H1 (cell line): ENCODE measurements at regions of chr21 and their contacts with region 1.

Region 1: GRCh38 chr21:45140346-45140940 is 66.1 kb downstream of the ADARB1 start:
- DNase-seq: peak; percentile 68 to 73
- H3K4me3 ChIP-seq: no peak overlapping the region
- H3K27ac ChIP-seq: no peak overlapping the region
- H3K4me1 ChIP-seq: no peaks in the 10 kb centered on the region
- H3K27me3 ChIP-seq: no peaks in the 10 kb centered on the region
- CTCF ChIP-seq: peak; percentile 90 to 99 (median 99)
- EP300 ChIP-seq: no peak
- POLR2A ChIP-seq: no peak
- RAD21 ChIP-seq: peak; percentile 97

Region 2: DNA sequence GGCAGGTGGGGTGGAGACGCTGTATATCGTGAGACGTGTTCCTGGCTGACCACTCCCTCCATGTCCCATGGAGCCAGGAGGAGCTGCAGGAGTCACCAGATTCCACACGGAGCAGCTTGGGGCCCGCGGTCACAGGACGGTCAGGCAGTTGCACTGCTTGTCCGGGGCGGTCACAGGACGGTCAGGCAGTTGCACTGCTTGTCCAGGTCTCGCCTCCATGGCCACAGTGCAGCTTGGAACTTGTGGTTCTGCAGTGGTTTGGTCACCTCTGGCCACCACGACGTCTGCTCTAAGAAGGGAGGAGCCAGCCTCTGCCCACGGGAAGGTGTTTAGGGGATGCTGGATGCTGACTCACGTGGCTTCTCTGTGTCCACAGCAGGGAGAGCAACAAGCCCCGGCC is 167.6 kb before region 1 on chr21:
- CTCF ChIA-PET with region 1: interaction called, 28 read pairs
- POLR2A ChIA-PET with region 1: no interaction called
- DNase-seq: no peak
- H3K4me3 ChIP-seq: no peak overlapping the region
- H3K27ac ChIP-seq: no peak overlapping the region
- H3K4me1 ChIP-seq: no peaks in the 10 kb centered on the region; a peak in 1 of 7 replicates
- H3K27me3 ChIP-seq: no peaks in the 10 kb centered on the region
- CTCF ChIP-seq: no peak
- EP300 ChIP-seq: no peak
- POLR2A ChIP-seq: no peak
- RAD21 ChIP-seq: no peak

Region 3: DNA sequence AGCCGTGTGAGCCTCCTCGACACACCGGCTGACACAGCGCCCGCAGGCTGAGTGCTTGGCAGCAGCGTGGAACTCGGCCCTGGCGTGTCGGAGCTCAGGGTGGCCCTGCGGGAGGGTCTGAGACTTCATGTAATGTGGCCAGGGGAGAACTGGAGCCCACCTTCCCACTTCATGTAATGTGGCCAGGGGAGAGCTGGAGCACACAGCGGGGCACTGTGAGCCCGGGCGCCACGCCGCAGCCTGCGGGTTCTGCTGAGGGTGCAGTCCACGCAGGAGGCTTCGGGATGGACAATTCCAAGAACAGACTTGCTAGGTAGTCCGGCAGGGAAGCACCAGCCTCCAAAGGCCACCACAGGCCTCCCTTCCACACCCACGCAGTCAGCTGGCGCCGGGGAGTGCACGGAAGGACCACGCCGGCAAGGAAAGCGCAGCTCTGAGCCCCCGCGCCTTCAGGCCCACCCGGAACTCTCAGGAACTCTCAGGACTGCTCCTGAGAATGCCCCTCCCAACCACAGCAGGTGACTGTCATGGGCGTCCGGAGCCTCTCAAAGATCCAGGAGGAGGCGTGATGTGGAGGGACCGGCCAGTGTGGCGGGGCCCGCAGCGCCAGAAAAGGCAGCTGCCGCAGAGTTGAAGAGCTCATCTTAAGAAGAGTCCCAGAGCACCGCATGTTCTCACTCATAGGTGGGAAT is 85.4 kb before region 1 on chr21:
- CTCF ChIA-PET with region 1: interaction called, 11 read pairs
- POLR2A ChIA-PET with region 1: no interaction called
- DNase-seq: no peak
- H3K4me3 ChIP-seq: no peak overlapping the region
- H3K27ac ChIP-seq: no peak overlapping the region
- H3K4me1 ChIP-seq: peaks cover 5 to 15% (median 12%) of the 10 kb centered on the region in 4 experiments
- H3K27me3 ChIP-seq: peaks cover 0 to 3% (median 2%) of the 10 kb centered on the region in 4 experiments; a peak in 2 of 7 replicates
- CTCF ChIP-seq: no peak
- EP300 ChIP-seq: no peak
- POLR2A ChIP-seq: no peak
- RAD21 ChIP-seq: no peak

Region 4: DNA sequence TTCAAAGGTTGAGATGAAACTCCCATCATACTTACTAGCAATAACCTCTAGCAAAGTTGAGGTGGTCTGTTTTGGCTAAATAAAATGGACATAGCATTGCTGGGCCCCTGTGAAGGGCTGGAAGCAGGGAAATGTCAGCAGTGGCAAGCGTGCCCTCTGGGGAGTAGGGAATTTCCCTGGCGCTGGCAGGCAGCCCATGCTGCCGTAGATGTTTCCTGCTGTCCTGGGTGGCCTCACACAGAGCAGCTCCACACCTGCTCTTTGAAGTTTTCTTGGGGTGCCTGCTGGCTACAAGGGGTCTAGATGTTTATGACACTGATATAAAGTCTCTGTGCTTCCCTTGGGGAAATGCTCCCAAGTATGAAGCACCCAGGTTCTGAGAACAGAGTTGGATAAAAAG is 35.9 kb before region 1 on chr21:
- CTCF ChIA-PET with region 1: interaction called, 99 read pairs
- POLR2A ChIA-PET with region 1: interaction called, 3 read pairs
- DNase-seq: no peak
- H3K4me3 ChIP-seq: no peak overlapping the region
- H3K27ac ChIP-seq: no peak overlapping the region
- H3K4me1 ChIP-seq: no peaks in the 10 kb centered on the region
- H3K27me3 ChIP-seq: no peaks in the 10 kb centered on the region
- CTCF ChIP-seq: no peak
- EP300 ChIP-seq: no peak
- POLR2A ChIP-seq: no peak
- RAD21 ChIP-seq: no peak

Region 5: GRCh38 chr21:45152265-45152746 is 11.9 kb after region 1 on chr21:
- CTCF ChIA-PET with region 1: interaction called, 59 read pairs
- POLR2A ChIA-PET with region 1: interaction called, 3 read pairs
- DNase-seq: peak; percentile 25 to 58
- H3K4me3 ChIP-seq: no peak overlapping the region
- H3K27ac ChIP-seq: no peak overlapping the region
- H3K4me1 ChIP-seq: no peaks in the 10 kb centered on the region; a peak in 1 of 7 replicates
- H3K27me3 ChIP-seq: peaks cover 0 to 2% (median 0%) of the 10 kb centered on the region in 4 experiments; a peak in 1 of 7 replicates
- CTCF ChIP-seq: peak; percentile 61 to 75 (median 66)
- EP300 ChIP-seq: no peak
- POLR2A ChIP-seq: no peak
- RAD21 ChIP-seq: peak; percentile 70 to 77

Region 6: DNA sequence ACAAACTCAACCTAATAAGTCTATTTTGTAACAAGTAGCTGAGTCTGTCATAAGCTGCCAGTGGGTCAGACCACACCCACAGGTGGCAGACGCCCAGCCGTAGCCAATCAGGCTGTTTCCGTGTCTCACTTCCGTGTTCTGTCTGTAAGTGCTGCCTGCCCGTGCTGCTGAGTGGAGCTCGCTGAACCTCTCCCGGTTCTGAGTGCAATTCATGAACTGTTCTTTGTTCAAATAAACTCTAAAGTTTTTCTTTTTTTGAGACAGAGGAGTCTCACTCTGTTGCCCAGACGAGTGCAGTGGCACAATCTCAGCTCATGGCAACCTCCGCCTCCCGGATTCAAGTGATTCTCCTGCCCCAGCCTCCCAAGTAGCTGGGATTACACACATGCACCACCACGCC is 122.2 kb after region 1 on chr21:
- CTCF ChIA-PET with region 1: interaction called, 37 read pairs
- POLR2A ChIA-PET with region 1: no interaction called
- DNase-seq: peak in 1 of 2 experiments; percentile 26
- H3K4me3 ChIP-seq: no peak overlapping the region
- H3K27ac ChIP-seq: no peak overlapping the region
- H3K4me1 ChIP-seq: peaks cover 0 to 4% (median 0%) of the 10 kb centered on the region in 4 experiments; a peak in 1 of 7 replicates
- H3K27me3 ChIP-seq: no peaks in the 10 kb centered on the region
- CTCF ChIP-seq: no peak
- EP300 ChIP-seq: no peak
- POLR2A ChIP-seq: no peak
- RAD21 ChIP-seq: no peak

Region 7: GRCh38 chr21:45954261-45954660 is 813.8 kb after region 1 on chr21:
- CTCF ChIA-PET with region 1: no interaction called
- POLR2A ChIA-PET with region 1: no interaction called
- DNase-seq: no peak
- H3K4me3 ChIP-seq: no peak overlapping the region
- H3K27ac ChIP-seq: no peak overlapping the region
- H3K4me1 ChIP-seq: no peaks in the 10 kb centered on the region; a peak in 1 of 7 replicates
- H3K27me3 ChIP-seq: no peaks in the 10 kb centered on the region
- CTCF ChIP-seq: peak; percentile 15 to 47 (median 31); a peak in 2 of 4 replicates
- EP300 ChIP-seq: no peak
- POLR2A ChIP-seq: no peak
- RAD21 ChIP-seq: peak; percentile 24 to 39; a peak in 3 of 4 replicates